ENCODE measurements at regions of chr5 and their contacts with region 1.

Region 1: DNA sequence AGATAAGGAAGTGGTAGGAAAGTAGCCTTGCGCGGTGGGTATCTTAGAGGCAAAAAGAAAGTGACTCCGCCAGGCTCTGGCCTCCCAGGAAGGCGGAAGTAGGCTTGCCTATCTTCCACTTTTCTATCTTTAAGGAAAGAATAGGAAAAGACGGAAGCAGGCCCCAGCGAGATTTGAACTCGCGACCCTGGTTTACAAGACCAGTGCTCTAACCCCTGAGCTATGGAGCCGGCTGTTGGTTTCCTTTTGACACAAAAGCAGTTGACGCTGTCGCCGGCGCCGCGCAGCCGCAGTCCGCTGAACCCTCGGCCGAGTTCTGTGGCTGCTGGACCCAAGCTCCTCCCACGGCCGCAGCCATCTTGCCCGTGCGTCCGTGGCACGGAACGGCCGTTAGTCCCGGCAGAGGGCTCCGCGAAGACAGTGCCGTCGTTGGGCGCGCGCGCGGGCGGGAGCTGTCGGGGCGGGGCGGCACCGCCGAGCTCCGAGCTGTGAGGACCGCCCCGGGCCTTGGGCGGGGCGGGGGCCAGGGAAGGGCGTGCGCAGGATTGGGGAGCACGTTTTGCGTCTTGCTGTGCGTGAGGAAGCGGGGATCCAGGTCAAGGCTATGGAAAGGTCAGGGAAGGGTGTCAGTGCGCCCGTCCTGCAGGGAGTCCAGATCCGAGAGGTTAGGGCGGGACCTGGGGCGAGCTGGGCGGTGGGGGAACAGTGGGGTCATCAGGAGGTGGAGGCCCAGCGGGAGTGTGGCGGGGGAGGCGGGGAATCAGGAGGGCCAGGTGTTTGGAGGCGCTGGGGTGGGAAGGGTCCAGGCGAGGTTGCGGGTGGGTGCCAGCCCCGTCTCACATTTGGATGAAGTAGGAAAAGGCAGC is 13.2 kb downstream of the TRIM7 start:
- DNase-seq: peak; percentile 94 to 97
- ATAC-seq: peak; percentile 74 to 81 (median 76)
- H3K4me3 ChIP-seq: peak overlapping the region; percentile 92
- H3K27ac ChIP-seq: peak overlapping the region; percentile 92
- H3K4me1 ChIP-seq: peaks cover 5% of the 10 kb centered on the region
- H3K27me3 ChIP-seq: no peaks in the 10 kb centered on the region
- CTCF ChIP-seq: no peak

Region 2: GRCh38 chr5:181159286-181159829 is 32.4 kb before region 1 on chr5:
- intact Hi-C with region 1: no loop called
- DNase-seq: peak; percentile 87 to 93
- ATAC-seq: peak; percentile 90 to 97 (median 92)
- H3K4me3 ChIP-seq: no peak overlapping the region
- H3K27ac ChIP-seq: no peak overlapping the region
- H3K4me1 ChIP-seq: peaks cover 5% of the 10 kb centered on the region
- H3K27me3 ChIP-seq: peaks cover 0 to 2% (median 2%) of the 10 kb centered on the region in 3 donors
- CTCF ChIP-seq: peak; percentile 83

Region 3: DNA sequence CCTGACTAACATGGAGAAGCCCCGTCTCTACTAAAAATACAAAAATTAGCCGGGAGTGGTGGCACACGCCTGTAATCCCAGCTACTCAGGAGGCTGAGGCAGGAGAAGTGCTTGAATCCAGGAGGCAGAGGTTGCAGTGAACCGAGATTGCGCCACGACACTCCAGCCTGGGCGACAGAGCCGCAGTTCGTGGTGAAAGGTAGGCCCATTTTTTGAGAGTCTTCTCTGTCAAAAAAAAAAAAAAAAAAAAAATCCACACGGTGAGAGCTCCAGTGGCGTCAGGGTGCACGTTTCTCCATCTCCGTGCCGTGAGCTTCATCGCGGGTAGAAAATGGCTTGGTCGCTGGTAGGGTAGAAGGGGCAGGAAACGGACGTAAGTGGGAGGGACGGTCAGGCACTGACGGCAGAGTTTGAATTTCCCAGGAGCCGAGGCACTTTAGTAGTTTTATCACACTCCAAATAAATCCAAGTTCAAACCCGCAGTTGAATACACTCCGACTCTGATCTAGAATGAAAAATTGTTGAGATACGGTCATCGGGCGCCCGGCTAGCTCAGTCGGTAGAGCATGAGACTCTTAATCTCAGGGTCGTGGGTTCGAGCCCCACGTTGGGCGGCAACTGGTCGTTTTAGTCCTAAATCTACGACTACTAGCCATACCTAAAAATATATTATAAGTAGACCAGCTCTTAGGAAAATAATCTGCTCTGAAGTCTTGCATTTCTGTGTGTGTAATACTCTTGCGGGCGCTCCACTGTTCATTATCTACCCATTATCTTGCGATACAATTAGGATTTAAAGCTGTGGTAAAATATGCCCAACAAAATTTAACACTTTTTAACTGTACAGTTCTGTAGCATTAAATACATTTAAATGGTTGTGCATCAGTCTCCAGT is 15.7 kb after region 1 on chr5:
- intact Hi-C with region 1: loop called in 1 of 2 experiments (anchors 1 kb)
- DNase-seq: peak; percentile 74 to 80
- ATAC-seq: peak; percentile 16 to 53 (median 20)
- H3K4me3 ChIP-seq: peak overlapping the region; percentile 76
- H3K27ac ChIP-seq: peak overlapping the region; percentile 93
- H3K4me1 ChIP-seq: peaks cover 34% of the 10 kb centered on the region
- H3K27me3 ChIP-seq: no peaks in the 10 kb centered on the region
- CTCF ChIP-seq: no peak

Region 4: DNA sequence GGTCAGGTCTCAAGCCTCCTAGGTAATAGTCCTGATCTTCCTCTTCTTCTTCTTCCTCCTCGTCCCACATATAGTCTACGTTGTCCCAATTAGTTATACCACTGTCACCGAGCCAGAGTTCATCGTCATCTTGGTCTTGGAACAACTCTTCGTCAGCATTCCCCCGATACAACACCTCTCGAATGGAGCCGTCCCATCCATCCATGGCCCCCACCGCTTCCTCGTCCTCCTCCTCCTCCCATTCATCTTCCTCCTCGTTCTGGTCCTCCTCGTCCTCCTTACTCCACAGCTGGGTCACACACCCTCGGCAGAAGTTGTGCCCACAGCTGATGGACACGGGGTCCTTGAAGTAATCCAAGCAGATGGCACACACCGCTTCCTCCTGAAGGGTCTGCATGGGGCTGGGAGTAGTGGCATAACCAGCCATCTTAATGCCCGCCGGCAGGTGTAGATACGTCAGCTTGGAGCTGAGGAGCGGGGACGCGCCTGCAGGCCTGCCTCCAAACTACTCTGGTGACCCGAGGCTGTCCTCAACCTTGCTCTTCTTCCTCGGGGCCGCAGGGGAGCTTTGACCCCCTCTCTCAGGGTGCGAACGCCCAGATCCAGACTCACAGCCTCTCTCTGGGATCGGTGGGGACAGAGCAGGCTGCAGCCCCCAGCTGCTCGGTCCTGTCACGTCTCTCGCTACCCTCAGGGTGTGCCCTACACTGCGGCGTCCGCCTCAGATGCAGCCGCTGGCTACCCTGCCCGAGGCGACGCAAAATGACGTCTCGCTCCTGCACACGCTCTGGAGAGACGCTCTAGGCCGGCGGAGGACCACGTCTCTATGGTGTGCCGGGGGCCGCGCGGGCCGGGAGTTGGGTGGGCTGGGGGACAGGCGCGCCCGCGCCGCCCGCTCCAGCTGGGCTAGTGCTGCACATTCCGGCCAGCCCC is 68.9 kb after region 1 on chr5 and contains the start of gene TRIM52:
- intact Hi-C with region 1: loop called (anchors 1 to 5 kb)
- DNase-seq: peak; percentile 94 to 97
- ATAC-seq: peak; percentile 90 to 95 (median 92)
- H3K4me3 ChIP-seq: peak within 1 kb of the TSS; percentile 100
- H3K27ac ChIP-seq: peak within 1 kb of the TSS; percentile 99
- H3K4me1 ChIP-seq: peaks cover 55% of the 10 kb centered on the region
- H3K27me3 ChIP-seq: no peaks in the 10 kb centered on the region
- CTCF ChIP-seq: no peak
- total RNA-seq, gene TRIM52: 3.0 to 5.8 (median 5.3) TPM

Measured in psoas muscle (tissue), 8 donors.